ENCODE measurements at regions of chr18 and their contacts with region 1.

Region 1: DNA sequence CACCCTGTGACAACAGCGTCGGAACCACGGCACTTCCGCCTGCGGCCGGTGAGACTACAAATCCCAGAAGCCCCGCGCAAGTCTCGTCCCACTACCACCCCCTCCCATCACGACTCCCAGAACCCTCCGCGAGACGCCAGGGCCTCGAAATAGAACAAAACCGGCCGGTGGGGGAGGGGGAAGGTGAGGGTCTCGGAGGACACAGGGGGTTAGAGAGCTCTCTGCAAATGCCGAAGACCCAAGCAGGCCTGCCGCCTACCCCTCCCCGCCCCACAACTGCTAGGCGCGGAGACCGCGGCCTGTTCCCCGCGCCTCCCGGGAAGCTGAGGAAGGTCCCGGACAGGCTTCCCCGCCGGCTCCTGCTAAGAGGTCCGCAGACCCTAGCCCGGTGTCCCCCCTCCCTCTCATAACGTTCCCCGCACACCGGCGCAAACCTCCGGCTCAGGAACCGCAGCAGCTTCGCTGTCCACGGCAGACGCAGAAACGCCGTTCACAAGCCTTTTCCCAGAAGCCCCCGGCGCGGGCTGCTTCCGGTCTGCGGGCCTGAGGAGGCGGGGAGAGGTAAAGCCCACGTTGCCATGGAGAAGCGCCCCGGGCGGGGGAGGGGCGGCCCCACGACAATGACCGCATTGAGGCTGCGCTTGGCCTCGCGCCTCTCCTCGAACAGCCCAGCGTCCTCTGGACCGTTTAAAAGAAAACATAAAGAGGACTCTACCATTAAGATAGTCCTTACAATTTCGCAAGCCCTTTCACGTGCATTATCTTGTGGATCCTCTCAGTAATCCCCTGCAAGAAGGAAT is at the start of gene ZNF24:
- DNase-seq: peak; percentile 83 to 92 (median 87)
- ATAC-seq: peak; percentile 92
- H3K4me3 ChIP-seq: peak within 1 kb of the TSS; percentile 96
- H3K4me3 Mint-ChIP-seq: peak within 1 kb of the TSS; percentile 93 to 100 (median 98)
- H3K27ac ChIP-seq: peak within 1 kb of the TSS; percentile 100
- H3K27ac Mint-ChIP-seq: peak within 1 kb of the TSS; percentile 91 to 98 (median 98)
- H3K4me1 ChIP-seq: peaks cover 23 to 25% of the 10 kb centered on the region in 2 donors
- H3K4me1 Mint-ChIP-seq: peaks cover 30 to 56% (median 45%) of the 10 kb centered on the region in 7 donors
- H3K27me3 ChIP-seq: no peaks in the 10 kb centered on the region
- H3K27me3 Mint-ChIP-seq: no peaks in the 10 kb centered on the region
- total RNA-seq, gene ZNF24: 55.6 to 98.1 (median 80.8) TPM

Region 2: DNA sequence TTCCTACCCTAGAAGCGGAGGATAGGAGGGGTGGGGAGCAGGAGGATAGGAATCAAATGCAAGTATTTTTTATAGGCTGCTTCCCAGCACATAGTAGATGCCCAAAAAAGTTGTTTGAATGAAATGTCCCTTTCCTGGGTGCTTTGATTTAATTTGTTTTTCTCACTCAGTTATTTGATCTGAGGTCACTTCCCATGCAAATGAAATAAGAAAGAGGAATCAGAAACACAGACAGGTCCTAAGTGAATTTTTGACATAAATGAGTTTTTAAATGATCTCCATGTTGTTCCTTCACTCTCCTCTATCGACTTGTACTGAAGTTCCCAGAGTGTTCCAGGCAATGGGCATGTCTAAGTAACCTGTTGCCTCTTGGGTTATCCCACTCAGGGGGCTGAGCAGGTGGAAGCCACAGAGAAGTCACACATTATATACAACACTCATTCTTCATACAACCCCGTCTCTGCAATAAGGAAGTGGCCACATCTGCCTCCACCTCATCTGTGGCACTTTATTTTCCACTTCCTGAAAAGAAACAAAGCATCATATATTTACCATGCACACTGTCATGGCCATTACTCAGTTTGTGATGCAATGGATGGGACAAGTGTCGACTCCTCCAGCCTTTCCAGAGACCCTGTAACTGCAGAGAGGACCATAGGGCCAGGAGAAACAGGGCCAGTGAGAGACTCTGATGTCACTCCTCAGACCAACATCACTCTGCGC is 185.2 kb before region 1 on chr18:
- CTCF ChIA-PET with region 1: no interaction called
- POLR2A ChIA-PET with region 1: no interaction called
- intact Hi-C with region 1: loop called in 1 of 2 experiments (anchors 5 kb)
- DNase-seq: peak in 3 of 9 donors; percentile 9 to 27 (median 19)
- ATAC-seq: peak; percentile 88
- H3K4me3 ChIP-seq: no peak overlapping the region
- H3K4me3 Mint-ChIP-seq: peak overlapping the region in 3 of 10 donors; percentile 5 to 65 (median 48)
- H3K27ac ChIP-seq: no peak overlapping the region
- H3K27ac Mint-ChIP-seq: peak overlapping the region in 4 of 9 donors; percentile 11 to 90 (median 66)
- H3K4me1 ChIP-seq: peaks cover 0 to 6% of the 10 kb centered on the region in 2 donors
- H3K4me1 Mint-ChIP-seq: peaks cover 16 to 36% (median 24%) of the 10 kb centered on the region in 7 donors
- H3K27me3 ChIP-seq: no peaks in the 10 kb centered on the region
- H3K27me3 Mint-ChIP-seq: peaks cover 0 to 5% (median 0%) of the 10 kb centered on the region in 5 donors

Region 3: DNA sequence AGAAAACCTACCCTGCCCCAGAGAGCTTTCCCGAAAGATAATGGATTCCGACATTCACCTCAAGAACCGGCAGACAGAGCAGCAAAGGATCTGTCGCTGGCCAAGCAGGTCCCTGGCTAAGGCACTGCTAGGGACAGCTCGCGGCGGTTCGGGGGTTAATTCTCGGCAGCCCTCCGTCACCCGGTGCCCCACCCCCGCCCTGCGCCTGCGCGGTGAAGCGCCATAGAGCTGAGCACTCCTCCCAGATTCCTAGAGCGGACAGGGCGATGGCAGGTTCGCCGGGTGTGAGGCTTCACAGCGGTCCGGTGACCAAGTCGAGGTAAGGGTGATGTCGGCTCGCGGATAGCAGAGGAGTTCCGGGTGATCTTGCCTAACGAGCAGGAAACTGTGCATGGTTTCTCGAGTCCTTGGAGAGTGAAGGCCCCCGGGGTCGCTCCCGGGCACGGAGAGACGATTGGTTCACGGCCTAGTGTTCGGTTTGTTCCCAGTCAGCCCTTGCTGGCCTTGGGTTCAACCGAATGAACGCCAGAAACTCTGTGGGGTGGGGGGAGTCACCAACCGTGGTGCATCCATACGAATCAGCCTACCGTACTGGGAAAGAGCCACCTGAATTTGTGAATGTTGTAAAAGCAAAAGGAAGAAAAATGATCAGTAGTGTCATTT is 53.9 kb before region 1 on chr18 and contains the start of gene ZSCAN30:
- CTCF ChIA-PET with region 1: no interaction called
- POLR2A ChIA-PET with region 1: interaction called, 20 read pairs
- intact Hi-C with region 1: loop called (anchors 1 kb)
- DNase-seq: peak; percentile 90 to 96 (median 94)
- ATAC-seq: peak; percentile 99
- H3K4me3 ChIP-seq: peak within 1 kb of the TSS; percentile 90
- H3K4me3 Mint-ChIP-seq: peak within 1 kb of the TSS; percentile 97 to 99 (median 98)
- H3K27ac ChIP-seq: peak within 1 kb of the TSS; percentile 86
- H3K27ac Mint-ChIP-seq: peak within 1 kb of the TSS; percentile 94 to 100 (median 98)
- H3K4me1 ChIP-seq: peaks cover 16 to 18% of the 10 kb centered on the region in 2 donors
- H3K4me1 Mint-ChIP-seq: peaks cover 29 to 86% (median 75%) of the 10 kb centered on the region in 7 donors
- H3K27me3 ChIP-seq: no peaks in the 10 kb centered on the region
- H3K27me3 Mint-ChIP-seq: no peaks in the 10 kb centered on the region
- total RNA-seq, gene ZSCAN30: 14.0 to 23.2 (median 20.8) TPM

Region 4: DNA sequence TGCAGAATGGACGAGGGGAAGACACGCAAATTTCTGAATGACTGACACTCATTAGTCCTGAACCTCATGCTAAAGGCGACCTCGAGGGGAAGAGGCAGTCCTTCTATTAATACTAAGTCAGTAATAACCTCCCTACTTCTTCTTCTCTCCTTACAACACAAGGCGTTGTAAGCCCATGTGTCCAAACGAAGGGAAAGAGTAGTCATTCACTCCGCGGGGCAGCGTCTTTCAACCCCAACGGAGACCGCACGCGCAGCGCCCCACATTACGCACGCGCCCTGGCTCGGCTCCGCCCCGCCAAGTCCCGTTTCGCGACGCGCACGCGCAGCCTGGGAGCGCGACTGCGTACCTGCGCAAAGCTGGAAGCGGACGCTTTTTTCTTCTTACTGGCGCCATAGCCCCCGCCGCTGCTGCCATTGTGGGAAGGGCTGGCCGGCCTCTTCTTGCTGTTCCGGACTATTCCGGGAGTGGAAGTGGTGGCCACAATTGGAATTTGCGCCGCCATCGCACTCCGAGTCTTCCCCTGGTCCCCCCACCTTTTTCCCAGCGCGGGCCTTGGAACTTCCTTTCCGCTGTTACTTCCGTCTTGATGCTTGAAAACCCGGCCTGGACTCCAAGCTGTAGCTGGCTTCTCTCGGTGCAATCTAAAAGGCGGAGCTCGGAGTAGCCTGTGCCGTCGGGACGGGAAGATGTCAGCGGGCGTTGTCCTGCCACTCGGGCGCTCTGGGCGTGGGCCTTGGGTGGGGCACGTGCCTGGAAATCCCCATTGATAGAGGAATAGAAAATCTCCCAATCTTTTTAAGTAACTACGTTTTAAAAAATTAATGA is 153.4 kb after region 1 on chr18 and contains the start of gene INO80C:
- CTCF ChIA-PET with region 1: no interaction called
- POLR2A ChIA-PET with region 1: interaction called, 5 read pairs
- intact Hi-C with region 1: loop called (anchors 1 kb)
- DNase-seq: peak; percentile 87 to 94 (median 92)
- ATAC-seq: peak; percentile 93
- H3K4me3 ChIP-seq: peak within 1 kb of the TSS; percentile 96
- H3K4me3 Mint-ChIP-seq: peak within 1 kb of the TSS; percentile 84 to 100 (median 96)
- H3K27ac ChIP-seq: peak within 1 kb of the TSS; percentile 94
- H3K27ac Mint-ChIP-seq: peak within 1 kb of the TSS; percentile 96 to 100 (median 100)
- H3K4me1 ChIP-seq: peaks cover 9 to 12% of the 10 kb centered on the region in 2 donors
- H3K4me1 Mint-ChIP-seq: peaks cover 22 to 62% (median 51%) of the 10 kb centered on the region in 7 donors
- H3K27me3 ChIP-seq: no peaks in the 10 kb centered on the region
- H3K27me3 Mint-ChIP-seq: no peaks in the 10 kb centered on the region
- total RNA-seq, gene INO80C: 20.6 to 26.8 (median 25.7) TPM

Region 5: GRCh38 chr18:36067055-36067957 is 723.2 kb after region 1 on chr18 and contains the start of gene RPRD1A:
- CTCF ChIA-PET with region 1: no interaction called
- POLR2A ChIA-PET with region 1: no interaction called
- intact Hi-C with region 1: loop called (anchors 1 kb)
- DNase-seq: peak; percentile 90 to 98 (median 94)
- ATAC-seq: peak; percentile 96
- H3K4me3 ChIP-seq: peak within 1 kb of the TSS; percentile 88
- H3K4me3 Mint-ChIP-seq: peak within 1 kb of the TSS; percentile 92 to 98 (median 96)
- H3K27ac ChIP-seq: peak within 1 kb of the TSS; percentile 79
- H3K27ac Mint-ChIP-seq: peak within 1 kb of the TSS; percentile 85 to 97 (median 94)
- H3K4me1 ChIP-seq: peaks cover 11 to 16% of the 10 kb centered on the region in 2 donors
- H3K4me1 Mint-ChIP-seq: peaks cover 26 to 50% (median 44%) of the 10 kb centered on the region in 7 donors
- H3K27me3 ChIP-seq: no peaks in the 10 kb centered on the region
- H3K27me3 Mint-ChIP-seq: peaks cover 0 to 5% (median 0%) of the 10 kb centered on the region in 5 donors
- total RNA-seq, gene RPRD1A: 22.6 to 51.3 (median 28.7) TPM